ENCODE measurements at regions of chr1 and their contacts with region 1.

Region 1: GRCh38 chr1:186884251-186884650 is 55.5 kb downstream of the PLA2G4A start:
- H3K4me3 Mint-ChIP-seq: no peak overlapping the region
- H3K27ac Mint-ChIP-seq: peak overlapping the region; percentile 39
- H3K4me1 Mint-ChIP-seq: peaks cover 33% of the 10 kb centered on the region
- H3K27me3 Mint-ChIP-seq: no peaks in the 10 kb centered on the region

Region 2: DNA sequence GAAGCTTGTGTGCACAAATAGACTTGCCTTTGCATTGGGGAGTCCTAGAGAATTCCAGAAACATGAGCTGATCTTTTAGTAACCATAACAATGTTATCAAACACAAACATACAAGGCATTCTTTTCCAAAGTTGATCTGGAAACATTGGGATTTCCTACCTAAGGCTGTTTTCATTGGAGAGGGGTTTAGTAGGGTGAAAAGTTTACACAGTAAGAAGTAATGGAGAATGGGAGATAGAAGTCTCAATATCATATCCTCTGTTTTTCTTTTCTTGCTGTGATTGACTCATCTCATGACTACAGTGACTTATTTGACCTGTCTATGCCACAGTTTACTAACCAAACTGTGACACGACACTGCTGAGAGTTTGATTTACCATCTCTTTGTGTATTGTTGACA is 121.1 kb before region 1 on chr1:
- intact Hi-C with region 1: no loop called
- H3K4me3 Mint-ChIP-seq: no peak overlapping the region
- H3K27ac Mint-ChIP-seq: no peak overlapping the region
- H3K4me1 Mint-ChIP-seq: no peaks in the 10 kb centered on the region
- H3K27me3 Mint-ChIP-seq: no peaks in the 10 kb centered on the region

Region 3: GRCh38 chr1:186839041-186839400 is 45.2 kb before region 1 on chr1:
- intact Hi-C with region 1: loop called (anchors 10 kb)
- H3K4me3 Mint-ChIP-seq: peak overlapping the region; percentile 42
- H3K27ac Mint-ChIP-seq: peak overlapping the region; percentile 56
- H3K4me1 Mint-ChIP-seq: peaks cover 55% of the 10 kb centered on the region
- H3K27me3 Mint-ChIP-seq: no peaks in the 10 kb centered on the region